IMR-90 (cell line): ENCODE measurements at regions of chr4 and their contacts with region 1.

Region 1: DNA sequence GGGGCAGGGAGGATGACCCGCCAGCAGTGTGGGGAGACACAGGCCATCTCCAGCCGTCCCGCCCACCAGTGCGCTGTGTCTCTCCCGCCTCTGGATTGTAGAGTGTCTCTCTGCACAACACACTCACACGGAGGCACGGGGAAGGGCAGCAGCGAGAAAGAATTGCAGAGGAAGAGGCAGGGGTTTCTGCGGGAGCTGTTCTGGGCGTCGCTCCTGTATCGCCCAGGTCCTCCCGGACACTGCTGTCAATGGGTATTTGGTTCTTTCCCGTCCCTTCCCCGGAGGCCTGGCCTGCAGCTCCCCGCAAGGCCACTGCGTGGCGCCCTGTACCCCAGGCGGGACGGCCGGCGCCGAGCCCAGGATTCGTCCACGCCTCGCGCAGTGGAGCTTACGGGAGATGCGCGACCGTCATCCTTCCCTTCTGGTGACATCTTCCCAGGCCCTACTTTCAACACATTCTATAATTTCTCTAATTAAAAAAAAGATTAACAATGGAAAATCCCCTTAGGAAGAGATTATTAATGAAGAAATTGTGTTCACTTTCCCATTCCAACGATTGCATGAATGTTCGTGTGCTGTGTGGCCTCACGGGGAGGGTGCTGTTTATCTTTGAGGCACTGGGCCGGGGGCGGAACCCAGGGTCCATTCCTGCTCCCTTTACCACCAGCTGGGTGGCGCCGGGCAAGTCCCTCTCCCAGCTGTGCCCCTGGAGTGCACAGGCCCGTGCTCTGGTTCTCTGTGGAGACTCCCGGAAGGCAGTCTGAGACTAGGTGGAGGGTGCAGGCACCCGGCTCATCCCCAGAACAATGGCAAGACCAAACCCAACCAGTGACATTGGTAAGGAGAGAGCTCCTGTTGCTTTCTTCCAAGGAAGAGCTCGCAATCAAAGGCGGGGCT is 95.7 kb downstream of the CPZ start:
- DNase-seq: peak; percentile 2
- ATAC-seq: peak; percentile 85
- H3K4me3 ChIP-seq: no peak overlapping the region
- H3K27ac ChIP-seq: no peak overlapping the region
- H3K4me1 ChIP-seq: no peaks in the 10 kb centered on the region
- H3K27me3 ChIP-seq: peaks cover 3% of the 10 kb centered on the region; the same call in 1 of the 2 replicates
- CTCF ChIP-seq: peak; percentile 49
- POLR2A ChIP-seq: no peak
- RAD21 ChIP-seq: peak; percentile 32

Region 2: DNA sequence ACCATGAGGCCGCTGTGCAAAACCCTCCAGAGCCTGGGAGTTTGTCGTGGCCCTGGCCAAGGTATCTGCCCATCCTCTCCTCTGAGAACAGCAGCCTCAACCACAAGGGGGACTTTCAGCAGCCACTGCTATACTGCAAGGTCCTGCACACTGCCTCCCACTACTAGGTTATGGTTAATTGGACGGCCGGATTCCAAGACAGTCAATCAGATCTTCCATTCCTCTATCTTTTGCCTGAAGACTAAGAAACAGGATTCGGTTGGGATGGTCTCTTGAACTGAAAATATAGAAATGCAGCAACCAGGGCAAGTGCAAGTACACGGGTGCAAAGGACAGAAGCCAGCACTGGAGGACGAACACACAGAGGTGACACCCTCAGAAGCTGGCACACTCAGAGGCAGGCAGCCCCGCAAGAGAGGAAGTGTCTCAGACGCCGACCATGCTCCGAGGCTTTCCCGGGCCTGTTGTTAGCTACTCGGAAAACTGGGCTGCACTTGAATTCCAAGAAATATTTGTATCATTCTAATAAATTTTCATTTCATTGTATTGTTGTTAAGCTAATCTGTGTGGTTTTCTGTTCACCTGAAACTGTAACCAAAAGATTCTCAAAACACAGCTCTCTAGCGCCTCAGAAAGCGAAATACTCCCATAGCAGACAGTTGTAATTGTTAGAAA is 812.0 kb before region 1 on chr4:
- CTCF ChIA-PET with region 1: no interaction called
- POLR2A ChIA-PET with region 1: no interaction called
- dilution Hi-C with region 1: no loop called
- in situ Hi-C with region 1: no loop called
- intact Hi-C with region 1: no loop called
- DNase-seq: peak; percentile 73
- ATAC-seq: peak; percentile 60
- H3K4me3 ChIP-seq: no peak overlapping the region
- H3K27ac ChIP-seq: peak overlapping the region; percentile 47; the same call in 1 of the 2 replicates
- H3K4me1 ChIP-seq: peaks cover 44% of the 10 kb centered on the region
- H3K27me3 ChIP-seq: no peaks in the 10 kb centered on the region
- CTCF ChIP-seq: peak; percentile 45
- POLR2A ChIP-seq: no peak
- RAD21 ChIP-seq: peak; percentile 53

Region 3: GRCh38 chr4:8320386-8320750 is 367.9 kb before region 1 on chr4:
- CTCF ChIA-PET with region 1: no interaction called
- POLR2A ChIA-PET with region 1: no interaction called
- dilution Hi-C with region 1: no loop called
- in situ Hi-C with region 1: no loop called
- intact Hi-C with region 1: no loop called
- DNase-seq: no peak
- ATAC-seq: no peak
- H3K4me3 ChIP-seq: no peak overlapping the region
- H3K27ac ChIP-seq: no peak overlapping the region
- H3K4me1 ChIP-seq: peaks cover 12% of the 10 kb centered on the region
- H3K27me3 ChIP-seq: no peaks in the 10 kb centered on the region
- CTCF ChIP-seq: no peak
- POLR2A ChIP-seq: no peak
- RAD21 ChIP-seq: no peak

Region 4: DNA sequence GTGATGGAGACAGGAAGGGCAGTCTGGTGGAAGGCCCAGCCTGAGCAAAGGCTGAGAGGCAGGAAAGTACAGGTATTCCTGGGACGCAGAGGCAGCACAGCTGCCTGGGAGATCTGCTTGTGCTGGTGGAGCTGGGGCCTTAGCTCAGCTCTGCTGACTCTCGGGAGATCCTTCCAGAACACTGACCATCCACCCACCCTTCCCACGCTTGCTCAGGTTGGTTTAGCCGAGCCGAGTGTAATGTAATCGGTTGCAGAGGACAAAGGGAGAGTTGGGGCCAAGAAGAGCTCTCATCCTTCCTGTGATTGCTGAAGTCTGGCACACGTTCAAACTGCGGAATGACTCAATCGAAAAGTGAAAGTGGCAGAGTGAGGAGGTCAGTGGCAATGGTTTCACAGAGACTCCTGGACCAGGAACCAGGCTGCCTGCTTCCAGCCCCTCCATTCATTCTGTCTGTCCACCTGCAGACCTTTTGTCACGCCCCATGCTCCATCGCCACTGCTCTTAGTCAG is 151.2 kb before region 1 on chr4:
- CTCF ChIA-PET with region 1: no interaction called
- POLR2A ChIA-PET with region 1: no interaction called
- dilution Hi-C with region 1: no loop called
- in situ Hi-C with region 1: no loop called
- intact Hi-C with region 1: no loop called
- DNase-seq: peak; percentile 90
- ATAC-seq: peak; percentile 67
- H3K4me3 ChIP-seq: no peak overlapping the region
- H3K27ac ChIP-seq: peak overlapping the region; percentile 3; the same call in 1 of the 2 replicates
- H3K4me1 ChIP-seq: peaks cover 8% of the 10 kb centered on the region; the same call in 1 of the 2 replicates
- H3K27me3 ChIP-seq: no peaks in the 10 kb centered on the region; the same call in 1 of the 2 replicates
- CTCF ChIP-seq: no peak
- POLR2A ChIP-seq: no peak
- RAD21 ChIP-seq: no peak

Region 5: GRCh38 chr4:8744083-8744805 is 56.0 kb after region 1 on chr4:
- CTCF ChIA-PET with region 1: no interaction called
- POLR2A ChIA-PET with region 1: no interaction called
- dilution Hi-C with region 1: no loop called
- in situ Hi-C with region 1: no loop called
- intact Hi-C with region 1: no loop called
- DNase-seq: no peak
- ATAC-seq: no peak
- H3K4me3 ChIP-seq: no peak overlapping the region
- H3K27ac ChIP-seq: no peak overlapping the region
- H3K4me1 ChIP-seq: no peaks in the 10 kb centered on the region
- H3K27me3 ChIP-seq: no peaks in the 10 kb centered on the region
- CTCF ChIP-seq: no peak
- POLR2A ChIP-seq: no peak
- RAD21 ChIP-seq: no peak

Region 6: DNA sequence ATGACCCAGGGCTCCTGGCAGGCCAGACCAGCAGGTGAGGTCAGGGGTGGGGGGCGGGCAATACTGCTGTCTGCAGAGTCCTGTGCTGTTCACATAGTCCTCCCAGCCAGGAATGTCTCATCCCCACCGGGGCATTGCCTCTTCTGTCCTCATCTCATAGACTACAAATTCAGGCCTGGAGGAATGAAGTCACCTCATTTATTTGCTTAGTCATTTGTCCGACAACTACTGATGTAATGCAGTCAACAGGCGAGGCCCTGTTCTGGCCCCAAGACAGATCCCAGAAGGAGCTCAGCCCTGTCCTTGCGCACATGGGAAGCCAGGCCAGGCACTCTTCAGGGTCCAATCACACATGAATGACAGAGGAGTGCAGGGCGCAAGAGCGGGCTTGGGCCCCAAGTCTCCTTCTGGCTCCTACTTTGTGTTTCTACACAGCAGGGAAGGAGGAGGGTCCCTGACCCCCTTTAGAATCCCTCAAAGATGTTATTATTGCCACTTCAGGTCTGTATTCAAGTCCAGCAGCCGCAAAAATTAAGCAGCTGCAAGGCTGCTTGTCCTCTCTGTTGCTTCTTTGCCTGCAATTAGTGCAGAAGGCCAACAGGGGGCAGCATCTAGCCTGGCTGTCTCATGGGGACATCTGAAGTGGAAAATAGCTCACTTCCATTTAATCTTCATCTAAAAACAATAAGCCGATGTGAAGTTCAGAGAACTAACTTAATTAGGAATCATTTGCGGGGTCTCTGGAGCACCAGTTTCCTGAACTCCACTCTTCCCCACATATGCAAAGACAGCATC is 198.5 kb after region 1 on chr4:
- CTCF ChIA-PET with region 1: no interaction called
- POLR2A ChIA-PET with region 1: no interaction called
- dilution Hi-C with region 1: no loop called
- in situ Hi-C with region 1: no loop called
- intact Hi-C with region 1: loop called (anchors 10 kb)
- DNase-seq: no peak
- ATAC-seq: no peak
- H3K4me3 ChIP-seq: no peak overlapping the region
- H3K27ac ChIP-seq: no peak overlapping the region
- H3K4me1 ChIP-seq: no peaks in the 10 kb centered on the region
- H3K27me3 ChIP-seq: peaks cover 27% of the 10 kb centered on the region
- CTCF ChIP-seq: no peak; the same call in 1 of the 2 replicates
- POLR2A ChIP-seq: no peak
- RAD21 ChIP-seq: no peak

Region 7: GRCh38 chr4:8917868-8918783 is 229.8 kb after region 1 on chr4:
- CTCF ChIA-PET with region 1: no interaction called
- POLR2A ChIA-PET with region 1: no interaction called
- dilution Hi-C with region 1: no loop called
- in situ Hi-C with region 1: no loop called
- intact Hi-C with region 1: loop called (anchors 1 kb)
- DNase-seq: peak; percentile 19
- ATAC-seq: peak; percentile 98
- H3K4me3 ChIP-seq: no peak overlapping the region
- H3K27ac ChIP-seq: no peak overlapping the region
- H3K4me1 ChIP-seq: no peaks in the 10 kb centered on the region
- H3K27me3 ChIP-seq: no peaks in the 10 kb centered on the region
- CTCF ChIP-seq: peak; percentile 70
- POLR2A ChIP-seq: no peak
- RAD21 ChIP-seq: peak; percentile 74